ENCODE measurements at regions of chr10 and their contacts with region 1.

Region 1: GRCh38 chr10:13317474-13317873 is 17.6 kb upstream of the PHYH start:
- DNase-seq: no peak
- H3K4me3 ChIP-seq: no peak overlapping the region
- H3K27ac ChIP-seq: no peak overlapping the region
- H3K4me1 ChIP-seq: no peaks in the 10 kb centered on the region
- H3K27me3 ChIP-seq: no peaks in the 10 kb centered on the region
- CTCF ChIP-seq: no peak

Region 2: DNA sequence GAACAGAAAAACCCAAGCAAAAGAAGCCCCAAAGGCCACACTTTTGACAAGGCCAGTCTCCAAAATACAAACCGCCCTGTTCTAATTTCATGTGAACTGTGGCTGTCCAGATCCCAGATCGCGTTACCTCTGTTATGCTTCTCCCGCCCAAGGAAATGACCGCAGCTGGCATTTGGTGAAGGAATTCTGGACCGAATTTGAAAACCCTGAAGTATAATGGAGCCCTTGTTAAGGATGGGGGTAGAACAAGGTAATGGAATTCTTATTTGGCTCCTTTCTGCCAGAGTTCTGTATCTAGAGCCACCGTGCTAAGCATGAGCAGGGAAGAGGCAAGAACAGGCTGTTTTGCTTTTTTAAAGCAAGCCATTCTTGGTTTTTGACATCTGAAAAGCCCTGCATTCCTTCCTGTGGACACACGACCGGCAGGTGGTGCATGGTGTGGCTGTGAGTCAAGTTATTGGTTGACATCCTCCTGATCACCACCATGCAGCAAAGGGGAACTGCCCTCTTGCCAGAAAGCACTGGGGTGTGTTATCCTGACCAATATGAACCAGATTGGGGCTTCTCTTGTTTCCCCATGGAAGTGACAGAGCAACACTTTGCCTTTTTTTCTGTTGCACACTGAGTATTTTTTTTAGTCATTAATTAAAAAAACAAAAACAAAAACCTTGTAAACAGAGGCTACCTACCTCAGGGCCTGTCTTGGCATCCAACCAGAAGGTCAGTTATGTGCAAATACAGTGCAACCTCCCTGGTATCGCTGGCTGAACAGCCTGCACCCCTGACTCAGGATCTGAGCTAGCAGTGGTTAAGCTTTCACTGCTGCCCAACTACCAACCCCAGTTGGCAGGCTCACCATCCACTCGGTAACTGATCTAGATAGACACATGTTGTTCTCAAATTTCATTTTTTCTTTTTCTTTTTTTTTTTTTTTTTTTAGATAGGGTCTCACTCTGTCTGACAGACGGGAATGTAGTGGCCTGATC is 97.5 kb before region 1 on chr10:
- CTCF ChIA-PET with region 1: no interaction called
- POLR2A ChIA-PET with region 1: no interaction called
- intact Hi-C with region 1: no loop called
- DNase-seq: peak in 1 of 2 experiments; percentile 43
- H3K4me3 ChIP-seq: no peak overlapping the region
- H3K27ac ChIP-seq: no peak overlapping the region
- H3K4me1 ChIP-seq: no peaks in the 10 kb centered on the region
- H3K27me3 ChIP-seq: no peaks in the 10 kb centered on the region
- CTCF ChIP-seq: peak; percentile 47; the same call in 1 of the 2 replicates

Region 3: DNA sequence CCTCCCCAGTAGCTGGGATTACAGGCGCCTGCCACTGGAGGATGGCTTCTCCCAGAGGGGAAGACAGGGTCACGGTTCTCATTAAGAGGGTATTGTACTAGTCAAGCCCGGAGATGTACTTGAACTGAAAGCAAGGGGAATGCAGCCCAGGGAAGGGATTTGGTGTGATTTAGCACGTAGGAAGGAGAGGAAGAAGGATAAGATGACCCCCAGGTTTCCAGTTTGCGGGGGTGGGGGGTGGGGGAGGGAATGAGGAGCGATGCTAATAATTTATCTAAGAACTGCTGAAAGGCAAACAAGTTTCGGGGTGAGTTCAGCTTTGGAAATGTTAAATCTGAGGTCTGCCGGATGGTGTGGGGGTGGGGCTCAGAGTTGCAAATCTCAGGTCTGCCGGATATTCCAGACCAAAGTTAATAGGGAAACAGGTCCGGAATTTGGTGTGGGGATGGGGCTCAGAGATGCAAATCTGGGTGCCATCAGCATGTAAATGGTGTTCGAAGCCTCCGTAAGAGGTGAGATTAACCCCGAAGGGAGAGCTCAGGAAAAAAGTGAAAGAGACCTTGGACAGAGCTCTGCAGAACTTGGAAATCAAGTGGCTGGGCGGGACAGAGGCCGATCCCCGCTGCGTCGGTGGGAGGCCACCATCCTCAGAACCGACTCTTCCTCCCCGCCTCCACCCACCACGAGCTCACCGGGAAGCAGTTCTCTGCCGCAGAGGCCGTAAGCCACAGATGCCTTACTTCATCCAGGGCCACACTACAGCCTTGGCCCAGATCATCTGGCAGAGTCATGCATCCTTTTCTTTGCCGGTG is 32.2 kb after region 1 on chr10:
- CTCF ChIA-PET with region 1: interaction called, 10 read pairs
- POLR2A ChIA-PET with region 1: no interaction called
- intact Hi-C with region 1: no loop called
- DNase-seq: peak; percentile 36 to 55
- H3K4me3 ChIP-seq: peak overlapping the region; percentile 92
- H3K27ac ChIP-seq: no peak overlapping the region
- H3K4me1 ChIP-seq: 0 out of 2 replicates have a peak, but pooled peaks cover 15% of the 10 kb centered on the region
- H3K27me3 ChIP-seq: no peaks in the 10 kb centered on the region
- CTCF ChIP-seq: no peak

Region 4: DNA sequence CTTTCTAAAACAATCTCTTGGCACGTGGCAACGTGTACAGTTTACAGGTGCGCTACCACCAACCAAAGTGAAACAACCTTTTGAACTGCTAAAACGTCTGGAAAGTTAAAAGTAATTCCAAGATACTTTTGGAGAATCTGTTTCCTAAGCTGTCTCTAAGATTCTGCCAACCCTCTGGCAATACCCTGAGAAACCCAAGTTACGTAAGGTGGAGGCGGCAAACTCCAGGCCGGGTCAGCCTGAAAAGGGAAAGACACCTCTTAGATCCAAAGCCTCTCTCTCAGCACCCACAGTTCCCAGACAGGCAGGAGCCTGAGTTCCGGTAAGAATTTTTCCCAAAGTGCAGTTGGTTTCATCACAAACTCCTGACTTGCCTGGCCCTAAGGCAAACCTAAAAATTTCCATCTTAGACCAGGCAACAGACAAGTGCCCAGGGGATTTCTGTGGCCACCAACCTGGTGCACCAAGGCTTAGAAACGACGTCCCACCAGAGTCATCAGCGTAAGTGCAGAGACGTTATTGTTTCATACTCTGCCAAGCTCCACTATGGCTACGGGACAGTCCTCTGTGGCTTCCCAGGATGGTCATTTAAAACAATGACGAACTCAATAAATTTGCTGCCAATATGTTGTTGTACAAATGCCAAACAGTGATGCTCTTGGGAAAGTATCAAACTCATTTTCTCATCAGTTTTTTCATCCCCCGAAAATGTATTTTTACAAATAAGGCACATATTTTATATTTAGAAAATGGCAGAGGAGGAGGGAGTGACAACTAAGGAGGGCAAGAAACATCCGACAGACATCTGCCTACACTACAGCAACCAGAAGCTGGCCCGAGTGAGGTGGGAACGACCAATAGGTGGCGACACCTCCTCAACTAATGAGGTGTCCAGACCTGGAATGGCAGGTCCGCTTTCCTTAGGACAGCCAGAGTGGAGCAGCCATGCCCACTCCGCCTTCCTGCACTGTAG is 1219.1 kb after region 1 on chr10:
- CTCF ChIA-PET with region 1: no interaction called
- POLR2A ChIA-PET with region 1: no interaction called
- intact Hi-C with region 1: no loop called
- DNase-seq: peak in 1 of 2 experiments; percentile 65
- H3K4me3 ChIP-seq: no peak overlapping the region
- H3K27ac ChIP-seq: no peak overlapping the region
- H3K4me1 ChIP-seq: peaks cover 8% of the 10 kb centered on the region; the same call in 1 of the 2 replicates
- H3K27me3 ChIP-seq: no peaks in the 10 kb centered on the region
- CTCF ChIP-seq: peak; percentile 68

Region 5: GRCh38 chr10:14553448-14553847 is 1236.0 kb after region 1 on chr10:
- CTCF ChIA-PET with region 1: no interaction called
- POLR2A ChIA-PET with region 1: interaction called, 27 read pairs
- intact Hi-C with region 1: no loop called
- DNase-seq: no peak
- H3K4me3 ChIP-seq: no peak overlapping the region
- H3K27ac ChIP-seq: peak overlapping the region; percentile 69
- H3K4me1 ChIP-seq: peaks cover 59% of the 10 kb centered on the region
- H3K27me3 ChIP-seq: no peaks in the 10 kb centered on the region
- CTCF ChIP-seq: no peak